Cardiac septum (tissue), 1 donor: ENCODE measurements at regions of chr16 and their contacts with region 1.

Region 1: DNA sequence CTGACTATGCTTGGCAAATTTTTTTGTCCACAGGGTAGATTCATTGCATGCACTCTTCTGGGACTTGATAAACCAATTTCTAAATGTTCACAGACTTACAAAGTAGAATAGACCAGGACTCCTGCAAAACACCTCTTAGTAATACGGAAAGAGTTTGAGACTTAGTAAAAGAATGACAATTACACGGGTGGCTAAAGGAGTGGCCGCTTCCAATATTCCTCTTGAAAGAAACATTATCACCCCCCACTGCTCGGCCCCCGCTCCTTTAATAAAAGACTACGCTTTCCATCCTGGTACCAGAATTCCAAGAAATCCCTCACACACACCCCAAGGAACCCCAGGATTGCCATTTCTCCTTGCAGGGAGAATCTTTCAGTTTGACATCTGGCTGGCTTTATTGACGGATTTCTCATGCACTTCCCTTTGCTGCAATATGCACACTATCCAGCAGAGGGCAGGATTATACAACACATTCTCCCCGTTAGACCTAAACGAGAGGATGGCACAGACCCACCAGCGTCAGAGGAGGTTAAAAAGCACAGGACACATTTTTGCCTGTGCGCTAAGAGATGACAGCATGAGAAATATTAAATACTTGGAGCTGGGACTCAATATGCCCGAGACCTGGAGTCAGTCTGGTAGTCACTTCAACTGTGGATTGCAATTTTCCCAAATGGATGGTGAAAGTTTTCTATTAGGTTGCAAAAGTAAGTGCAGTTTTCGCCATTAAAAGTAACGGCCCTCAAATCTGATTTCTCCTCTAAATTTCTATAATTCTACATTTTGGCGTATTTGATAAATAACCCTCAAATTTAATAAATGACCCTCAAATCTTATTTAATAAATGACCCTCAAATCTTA is 46.6 kb upstream of the NUDT7 start:
- DNase-seq: no peak

Region 2: GRCh38 chr16:77833921-77834634 is 158.4 kb after region 1 on chr16:
- intact Hi-C with region 1: no loop called
- DNase-seq: no peak

Region 3: GRCh38 chr16:78002915-78003538 is 327.3 kb after region 1 on chr16:
- intact Hi-C with region 1: loop called (anchors 2 kb)
- DNase-seq: peak; percentile 87

Region 4: GRCh38 chr16:78099372-78100161 is 423.9 kb after region 1 on chr16 and contains the start of gene WWOX:
- intact Hi-C with region 1: loop called (anchors 10 kb)
- DNase-seq: peak; percentile 97
- total RNA-seq, gene WWOX: 8.6 TPM